ENCODE measurements at regions of chr6 and their contacts with region 1.

Region 1: DNA sequence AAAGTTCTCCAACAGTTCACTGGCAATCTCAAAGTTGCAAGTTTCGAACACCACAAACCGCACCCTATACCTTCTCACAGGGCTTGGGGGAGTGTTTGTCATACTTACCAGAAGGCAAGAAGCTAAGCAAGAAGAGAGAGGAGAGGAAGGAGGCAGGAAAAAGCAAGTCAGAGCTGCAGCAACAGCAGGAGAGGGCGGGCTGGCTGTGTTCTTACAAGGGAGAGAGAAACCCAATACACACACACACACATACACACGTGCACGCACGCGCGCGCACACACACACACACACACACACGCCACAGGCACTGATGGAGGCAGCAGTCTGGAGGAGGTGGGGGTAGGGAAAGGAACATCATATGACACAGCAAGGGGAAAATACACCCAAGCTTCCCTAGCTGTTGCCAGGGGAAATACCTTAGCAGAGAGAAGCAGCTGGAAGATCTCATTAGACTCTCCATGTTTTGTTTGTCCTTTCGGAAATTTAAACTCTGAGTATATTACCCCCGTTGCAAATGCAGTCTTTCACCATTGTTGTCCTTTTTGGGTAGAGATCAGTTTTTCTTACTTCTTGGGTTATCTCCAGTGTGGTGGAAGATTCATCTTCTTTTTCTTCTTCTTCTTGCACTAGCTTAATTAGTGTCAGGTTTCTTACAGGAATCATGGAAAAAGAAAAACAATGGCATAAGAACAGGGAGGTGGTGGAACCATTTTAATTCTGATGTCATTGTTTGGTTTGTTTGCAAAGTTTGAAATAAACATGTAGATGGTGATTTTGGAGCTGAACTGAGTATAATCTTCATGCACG is at the start of gene TXLNB:
- DNase-seq: peak; percentile 91
- H3K4me3 Mint-ChIP-seq: peak within 1 kb of the TSS; percentile 79
- H3K27ac Mint-ChIP-seq: peak within 1 kb of the TSS; percentile 95
- H3K4me1 Mint-ChIP-seq: peaks cover 67% of the 10 kb centered on the region
- H3K27me3 Mint-ChIP-seq: no peaks in the 10 kb centered on the region
- total RNA-seq, gene TXLNB: 0.10 to 0.14 TPM

Region 2: DNA sequence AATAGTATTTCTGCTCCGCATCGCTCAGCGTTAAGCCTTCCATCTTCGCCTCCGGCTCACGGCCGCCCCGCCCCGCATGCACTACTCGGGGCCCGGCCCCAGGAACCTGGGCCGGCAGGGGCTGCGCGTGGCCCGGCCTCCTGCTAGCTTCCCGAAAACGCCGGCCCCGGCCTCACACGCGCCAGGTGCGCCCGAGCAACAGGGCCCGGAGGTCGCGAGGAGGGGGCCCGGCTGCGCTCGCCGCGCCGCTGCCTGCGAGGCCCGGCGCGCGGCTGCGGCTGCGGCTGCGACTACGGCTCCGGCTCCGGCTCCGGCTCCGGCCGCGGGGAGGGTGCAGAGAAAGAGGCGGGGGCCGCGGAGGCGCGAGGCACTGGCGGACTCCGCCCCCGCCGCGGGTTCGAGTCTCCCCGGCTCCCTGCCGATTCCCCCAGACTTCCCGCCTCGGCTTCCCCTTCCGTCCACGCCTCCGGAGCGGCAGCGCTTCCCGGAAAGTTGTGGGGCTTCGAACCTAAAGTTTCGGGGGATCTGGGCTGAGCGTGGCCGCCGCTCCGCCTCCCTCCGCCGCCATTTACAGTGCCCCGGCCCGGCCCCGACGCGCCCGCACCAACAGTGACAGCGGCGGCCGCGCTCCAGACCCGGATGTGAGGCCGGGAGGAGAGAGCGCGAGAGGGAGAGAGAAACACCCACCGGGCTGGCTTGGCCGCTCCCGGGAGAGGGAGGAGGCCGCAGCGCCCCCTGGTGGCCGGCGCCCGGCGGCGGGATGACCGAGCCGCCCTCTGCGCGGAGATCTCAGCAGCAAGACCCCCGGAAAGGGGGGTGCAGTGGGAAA is 304.2 kb before region 1 on chr6 and contains the start of gene REPS1:
- CTCF ChIA-PET with region 1: no interaction called
- intact Hi-C with region 1: loop called (anchors 1 kb)
- DNase-seq: peak; percentile 92
- H3K4me3 Mint-ChIP-seq: peak within 1 kb of the TSS; percentile 86
- H3K27ac Mint-ChIP-seq: peak within 1 kb of the TSS; percentile 89
- H3K4me1 Mint-ChIP-seq: peaks cover 4% of the 10 kb centered on the region
- H3K27me3 Mint-ChIP-seq: no peaks in the 10 kb centered on the region
- total RNA-seq, gene REPS1: 25.8 to 28.8 TPM

Region 3: DNA sequence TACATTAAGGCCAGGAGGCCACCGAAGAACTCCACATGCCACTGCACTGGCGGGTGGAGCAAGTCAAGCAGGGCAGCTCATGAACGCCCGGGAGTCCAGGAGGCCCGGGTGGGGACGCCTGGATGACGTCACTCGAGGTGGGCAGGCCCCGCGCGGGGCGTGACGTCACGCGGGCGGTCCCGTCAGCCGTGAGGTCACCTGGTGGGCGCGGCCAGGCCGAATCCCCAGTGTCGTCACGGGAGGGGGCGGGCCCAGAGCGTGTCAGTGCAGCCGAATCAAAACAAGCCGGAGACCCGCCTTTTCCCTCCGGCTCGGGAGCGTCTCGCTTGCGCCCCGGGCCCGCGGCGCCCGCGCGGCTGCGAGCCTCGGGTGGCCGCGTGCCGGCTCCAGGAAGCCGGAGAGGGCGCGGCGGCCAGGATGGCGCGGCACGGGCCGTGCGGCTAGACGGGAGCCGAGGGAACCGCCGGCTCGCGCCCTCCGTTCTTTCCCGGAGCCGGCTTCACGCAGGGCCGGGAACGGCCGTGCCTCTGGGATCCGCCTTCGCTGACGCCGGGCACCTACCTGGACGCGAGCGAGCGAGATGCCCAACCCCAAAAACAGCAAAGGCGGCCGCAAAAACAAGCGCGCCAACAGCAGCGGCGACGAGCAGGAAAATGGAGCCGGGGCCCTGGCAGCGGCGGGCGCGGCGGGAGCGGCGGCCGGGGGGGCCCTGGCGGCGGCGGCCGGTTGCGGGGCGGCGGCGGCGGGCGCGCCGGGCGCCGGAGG is 157.0 kb before region 1 on chr6 and contains the start of gene HECA:
- CTCF ChIA-PET with region 1: no interaction called
- intact Hi-C with region 1: loop called (anchors 2 kb)
- DNase-seq: peak; percentile 99
- H3K4me3 Mint-ChIP-seq: peak within 1 kb of the TSS; percentile 95
- H3K27ac Mint-ChIP-seq: peak within 1 kb of the TSS; percentile 99
- H3K4me1 Mint-ChIP-seq: peaks cover 49% of the 10 kb centered on the region
- H3K27me3 Mint-ChIP-seq: no peaks in the 10 kb centered on the region
- total RNA-seq, gene HECA: 61.1 to 61.2 TPM

Region 4: GRCh38 chr6:139173172-139173571 is 118.8 kb before region 1 on chr6:
- CTCF ChIA-PET with region 1: interaction called, 4 read pairs
- intact Hi-C with region 1: loop called (anchors 1 kb)
- DNase-seq: peak; percentile 46
- H3K4me3 Mint-ChIP-seq: no peak overlapping the region
- H3K27ac Mint-ChIP-seq: peak overlapping the region; percentile 85
- H3K4me1 Mint-ChIP-seq: peaks cover 88% of the 10 kb centered on the region
- H3K27me3 Mint-ChIP-seq: no peaks in the 10 kb centered on the region

Region 5: DNA sequence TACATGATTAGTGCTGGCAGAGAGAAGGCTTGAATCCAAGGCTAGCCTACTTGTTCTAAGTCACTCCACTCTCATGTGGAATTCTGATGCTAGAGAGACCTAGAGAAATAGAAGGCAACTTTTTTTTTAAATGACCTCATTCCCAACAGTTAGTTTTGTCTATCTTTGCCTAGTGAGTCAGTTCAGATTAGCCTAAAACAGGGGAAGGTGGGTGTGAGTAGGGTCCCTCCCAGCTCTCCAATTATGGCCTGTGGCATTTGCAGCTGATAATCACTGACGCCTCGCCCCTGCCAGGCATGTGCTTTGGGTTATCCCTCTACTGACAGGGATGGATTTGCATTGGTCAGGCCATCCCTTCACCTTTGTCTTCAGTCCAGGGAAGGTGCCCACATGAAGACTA is 13.8 kb before region 1 on chr6:
- CTCF ChIA-PET with region 1: interaction called, 3 read pairs
- intact Hi-C with region 1: loop called (anchors 1 kb)
- DNase-seq: no peak
- H3K4me3 Mint-ChIP-seq: no peak overlapping the region
- H3K27ac Mint-ChIP-seq: no peak overlapping the region
- H3K4me1 Mint-ChIP-seq: peaks cover 27% of the 10 kb centered on the region
- H3K27me3 Mint-ChIP-seq: no peaks in the 10 kb centered on the region

Region 6: GRCh38 chr6:139375232-139376016 is 83.4 kb after region 1 on chr6:
- CTCF ChIA-PET with region 1: interaction called, 3 read pairs
- intact Hi-C with region 1: loop called (anchors 1 kb)
- DNase-seq: peak; percentile 80
- H3K4me3 Mint-ChIP-seq: peak overlapping the region; percentile 96
- H3K27ac Mint-ChIP-seq: peak overlapping the region; percentile 93
- H3K4me1 Mint-ChIP-seq: peaks cover 31% of the 10 kb centered on the region
- H3K27me3 Mint-ChIP-seq: no peaks in the 10 kb centered on the region

Measured in activated naive CD4-positive, alpha-beta T cell treated with anti-CD3 and anti-CD28 coated beads for 36 hours (primary cell).